Activated CD8-positive, alpha-beta T cell treated with anti-CD3 and anti-CD28 coated beads, Interleukin-2, amount 10 ng/mL, durations not matched to agents 7 days and 5 days (primary cell): ENCODE measurements at regions of chr9 and their contacts with region 1.

Region 1: GRCh38 chr9:4353236-4353635 is 53.4 kb upstream of the GLIS3 start:
- DNase-seq: no peak
- ATAC-seq: no peak
- H3K4me3 Mint-ChIP-seq: no peak overlapping the region
- H3K27ac Mint-ChIP-seq: no peak overlapping the region
- H3K4me1 Mint-ChIP-seq: no peaks in the 10 kb centered on the region
- H3K27me3 Mint-ChIP-seq: peaks cover 7% of the 10 kb centered on the region

Region 2: DNA sequence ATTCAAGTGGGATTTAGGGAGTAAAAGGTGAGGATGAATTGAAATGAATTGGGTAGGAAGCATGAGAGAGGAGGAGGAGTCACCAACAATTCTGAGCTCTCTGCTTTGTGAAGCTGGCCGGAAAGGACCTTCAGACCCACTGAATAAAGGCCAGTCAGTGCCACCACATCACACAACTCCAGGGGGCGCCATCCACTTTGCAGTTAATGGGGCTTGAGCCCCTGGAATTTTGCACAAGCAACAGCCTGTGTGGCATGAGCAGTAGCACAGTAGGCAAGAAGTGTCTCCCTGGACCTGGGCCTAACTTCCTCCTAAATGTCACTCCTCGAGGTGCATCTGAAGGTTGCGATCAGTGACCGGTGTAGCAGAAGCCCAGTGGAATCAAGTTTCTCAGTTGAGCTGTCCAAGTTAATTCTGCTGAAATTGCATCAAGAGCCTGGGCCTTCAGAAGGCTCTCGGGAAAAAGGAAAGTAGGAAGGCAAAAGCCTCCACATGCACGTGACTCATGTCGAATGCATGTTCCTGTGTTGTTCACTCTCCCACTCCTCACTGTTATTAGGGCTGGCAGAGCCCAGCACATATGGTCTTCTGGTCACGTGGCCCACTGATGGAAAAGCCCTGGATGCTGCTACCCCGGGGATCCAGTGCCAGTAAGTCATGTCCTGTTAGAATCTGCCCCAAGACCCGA is 25.6 kb before region 1 on chr9:
- CTCF ChIA-PET with region 1: no interaction called
- POLR2A ChIA-PET with region 1: no interaction called
- DNase-seq: no peak
- ATAC-seq: no peak
- H3K4me3 Mint-ChIP-seq: no peak overlapping the region
- H3K27ac Mint-ChIP-seq: no peak overlapping the region
- H3K4me1 Mint-ChIP-seq: peaks cover 3% of the 10 kb centered on the region
- H3K27me3 Mint-ChIP-seq: no peaks in the 10 kb centered on the region

Region 3: GRCh38 chr9:4366591-4367330 is 13.5 kb after region 1 on chr9:
- CTCF ChIA-PET with region 1: interaction called, 11 read pairs
- POLR2A ChIA-PET with region 1: no interaction called
- DNase-seq: peak; percentile 36
- ATAC-seq: no peak
- H3K4me3 Mint-ChIP-seq: no peak overlapping the region
- H3K27ac Mint-ChIP-seq: no peak overlapping the region
- H3K4me1 Mint-ChIP-seq: no peaks in the 10 kb centered on the region
- H3K27me3 Mint-ChIP-seq: peaks cover under 1% of the 10 kb centered on the region

Region 4: GRCh38 chr9:4386819-4387218 is 33.6 kb after region 1 on chr9:
- CTCF ChIA-PET with region 1: no interaction called
- POLR2A ChIA-PET with region 1: no interaction called
- DNase-seq: no peak
- ATAC-seq: no peak
- H3K4me3 Mint-ChIP-seq: no peak overlapping the region
- H3K27ac Mint-ChIP-seq: no peak overlapping the region
- H3K4me1 Mint-ChIP-seq: no peaks in the 10 kb centered on the region
- H3K27me3 Mint-ChIP-seq: no peaks in the 10 kb centered on the region